Posterior vena cava (tissue), 2 donors: ENCODE measurements at regions of chr10 and their contacts with region 1.

Region 1: GRCh38 chr10:32293581-32293980 is 53.4 kb downstream of the EPC1 start:
- DNase-seq: no peak

Region 2: DNA sequence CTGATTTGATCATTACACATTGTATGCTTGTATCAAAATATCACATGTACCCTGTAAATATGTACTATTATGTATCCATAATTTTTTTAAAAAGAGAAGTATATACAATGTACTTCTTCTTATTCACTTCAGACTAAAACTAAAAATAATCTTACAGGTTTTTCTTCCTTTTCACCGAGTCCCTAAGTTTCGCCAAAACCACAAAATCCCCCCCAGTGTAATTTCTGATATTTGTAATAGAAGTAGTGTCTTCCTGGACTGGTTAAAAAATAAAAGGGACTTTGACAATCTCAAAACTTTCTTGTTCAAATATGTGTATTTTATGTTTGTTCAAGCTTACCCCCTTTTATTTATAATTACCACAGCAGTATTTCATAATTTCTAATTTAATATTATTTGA is 29.5 kb after region 1 on chr10:
- intact Hi-C with region 1: loop called in 1 of 2 experiments (anchors 2 kb)
- DNase-seq: no peak